ENCODE measurements at regions of chr17 and their contacts with region 1.

Region 1: GRCh38 chr17:75338335-75338734 is 49.1 kb upstream of the SLC25A19 start:
- DNase-seq: no peak
- H3K4me3 ChIP-seq: peak overlapping the region; percentile 36
- H3K27ac ChIP-seq: peak overlapping the region; percentile 94
- H3K4me1 ChIP-seq: peaks cover 89% of the 10 kb centered on the region
- CTCF ChIP-seq: no peak

Region 2: GRCh38 chr17:74917430-74917829 is 420.9 kb before region 1 on chr17:
- CTCF ChIA-PET with region 1: no interaction called
- POLR2A ChIA-PET with region 1: no interaction called
- intact Hi-C with region 1: no loop called
- DNase-seq: peak; percentile 22
- H3K4me3 ChIP-seq: no peak overlapping the region
- H3K27ac ChIP-seq: no peak overlapping the region
- H3K4me1 ChIP-seq: no peaks in the 10 kb centered on the region
- CTCF ChIP-seq: no peak

Region 3: GRCh38 chr17:75371339-75371738 is 33.0 kb after region 1 on chr17:
- CTCF ChIA-PET with region 1: no interaction called
- POLR2A ChIA-PET with region 1: interaction called, 20 read pairs
- intact Hi-C with region 1: no loop called
- DNase-seq: peak; percentile 56
- H3K4me3 ChIP-seq: no peak overlapping the region
- H3K27ac ChIP-seq: peak overlapping the region; percentile 1
- H3K4me1 ChIP-seq: peaks cover 80% of the 10 kb centered on the region
- CTCF ChIP-seq: no peak

Region 4: GRCh38 chr17:75405365-75406221 is 67.3 kb after region 1 on chr17 and contains the start of gene GRB2:
- CTCF ChIA-PET with region 1: no interaction called
- POLR2A ChIA-PET with region 1: interaction called, 30 read pairs
- intact Hi-C with region 1: no loop called
- DNase-seq: peak; percentile 100
- H3K4me3 ChIP-seq: peak within 1 kb of the TSS; percentile 84
- H3K27ac ChIP-seq: peak within 1 kb of the TSS; percentile 81
- H3K4me1 ChIP-seq: peaks cover 62% of the 10 kb centered on the region
- CTCF ChIP-seq: no peak
- total RNA-seq, gene GRB2: 240 and 244 TPM in 2 replicates